Activated B cell treated with CpG ODN at 0.5 μM for 24 hours (primary cell): ENCODE measurements at regions of chr10 and their contacts with region 1.

Region 1: GRCh38 chr10:62177093-62177492 is 91.6 kb downstream of the RTKN2 start:
- DNase-seq: no peak
- ATAC-seq: no peak
- H3K4me3 Mint-ChIP-seq: no peak overlapping the region
- H3K27ac Mint-ChIP-seq: no peak overlapping the region
- H3K4me1 Mint-ChIP-seq: peaks cover 2% of the 10 kb centered on the region
- H3K27me3 Mint-ChIP-seq: no peaks in the 10 kb centered on the region
- CTCF ChIP-seq: no peak

Region 2: GRCh38 chr10:62186999-62187677 is 10.0 kb after region 1 on chr10:
- CTCF ChIA-PET with region 1: no interaction called
- POLR2A ChIA-PET with region 1: interaction called, 4 read pairs
- intact Hi-C with region 1: loop called (anchors 2 kb)
- DNase-seq: no peak
- ATAC-seq: no peak
- H3K4me3 Mint-ChIP-seq: no peak overlapping the region
- H3K27ac Mint-ChIP-seq: no peak overlapping the region
- H3K4me1 Mint-ChIP-seq: peaks cover 26% of the 10 kb centered on the region
- H3K27me3 Mint-ChIP-seq: no peaks in the 10 kb centered on the region
- CTCF ChIP-seq: no peak

Region 3: DNA sequence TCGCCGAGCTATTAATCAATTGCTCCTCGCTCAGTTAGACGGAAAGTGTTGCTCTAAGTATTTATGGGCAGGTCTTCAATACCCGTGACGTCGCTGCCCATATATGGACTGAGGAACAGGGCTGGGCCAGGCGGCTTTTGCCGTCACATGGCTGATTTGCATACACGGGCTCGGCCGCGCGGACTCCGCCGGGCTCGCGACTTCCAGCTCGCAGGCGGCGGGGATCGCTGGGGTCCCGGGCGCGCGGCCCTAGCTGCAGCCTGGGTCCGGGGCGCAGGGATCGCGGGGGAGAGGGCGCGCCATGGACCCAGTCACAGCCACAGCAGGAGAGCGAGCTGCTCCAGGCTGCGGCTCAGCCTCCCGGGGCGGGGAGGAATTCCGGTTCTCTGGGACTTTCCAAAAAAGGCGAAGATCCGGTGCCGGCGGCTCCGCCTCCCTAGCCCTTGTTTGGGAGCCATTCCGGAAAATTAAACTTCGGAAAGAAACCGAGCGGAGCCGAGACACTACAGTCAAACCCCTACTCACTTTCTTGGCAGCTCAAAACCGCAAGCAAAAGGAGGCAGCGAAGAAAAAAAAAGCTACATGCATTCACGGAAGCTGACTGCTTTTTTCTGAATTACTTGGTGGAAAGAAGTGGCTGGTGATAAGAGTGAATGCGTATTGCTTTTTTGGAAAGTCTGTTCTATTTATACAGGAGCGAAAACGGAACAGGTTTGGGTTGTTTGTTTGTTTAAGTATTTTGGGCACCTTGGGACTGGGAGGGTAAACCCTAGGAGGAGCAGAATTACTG is 639.4 kb after region 1 on chr10 and contains the start of gene EGR2:
- CTCF ChIA-PET with region 1: no interaction called
- POLR2A ChIA-PET with region 1: no interaction called
- intact Hi-C with region 1: no loop called
- DNase-seq: peak; percentile 96
- ATAC-seq: peak; percentile 75
- H3K4me3 Mint-ChIP-seq: peak within 1 kb of the TSS; percentile 92
- H3K27ac Mint-ChIP-seq: peak within 1 kb of the TSS; percentile 94
- H3K4me1 Mint-ChIP-seq: peaks cover 56% of the 10 kb centered on the region
- H3K27me3 Mint-ChIP-seq: peaks cover 8% of the 10 kb centered on the region
- CTCF ChIP-seq: no peak
- total RNA-seq, gene EGR2: 6.1 and 9.4 TPM in 2 replicates